Sigmoid colon (tissue), 7 donors: ENCODE measurements at regions of chr2 and their contacts with region 1.

Region 1: DNA sequence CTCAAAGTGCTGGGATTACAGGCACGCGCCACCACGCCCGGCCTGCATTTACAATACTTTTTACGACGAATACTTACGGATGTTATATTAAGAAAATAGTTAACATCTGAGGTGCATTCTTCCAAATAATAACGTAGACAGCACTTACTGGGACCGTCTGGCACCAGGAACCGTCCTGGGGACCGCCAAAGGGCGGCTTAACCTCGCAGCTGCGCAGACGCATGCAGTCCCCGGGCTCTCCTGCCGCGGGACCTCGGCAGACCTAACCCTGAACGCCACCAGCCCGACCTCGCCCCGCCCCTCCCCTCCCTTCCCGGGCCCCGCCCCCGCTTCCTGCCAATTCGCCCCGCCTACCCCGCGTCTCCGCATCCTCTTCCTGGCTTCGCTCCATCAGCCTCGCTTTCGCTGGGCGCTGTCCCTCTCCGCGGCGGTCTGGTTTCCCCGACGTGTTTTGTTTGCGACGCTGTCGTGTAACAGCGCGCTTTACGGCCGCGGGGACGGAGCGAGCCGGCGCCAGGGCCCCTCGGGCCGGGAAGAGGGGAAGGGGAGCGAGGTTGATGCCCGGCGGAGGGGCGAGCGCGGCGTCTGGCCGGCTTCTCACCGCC is at the start of gene CNOT11:
- DNase-seq: peak; percentile 99
- H3K4me3 ChIP-seq: peak within 1 kb of the TSS; percentile 80 to 99 (median 98)
- H3K27ac ChIP-seq: peak within 1 kb of the TSS; percentile 88 to 97 (median 94)
- H3K4me1 ChIP-seq: peaks cover 0 to 33% (median 31%) of the 10 kb centered on the region in 4 donors
- H3K27me3 ChIP-seq: no peaks in the 10 kb centered on the region
- CTCF ChIP-seq: peak in 1 of 4 experiments; percentile 8
- EP300 ChIP-seq: no peak
- POLR2A ChIP-seq: peak; percentile 49 to 74
- total RNA-seq, gene CNOT11: 21.4 to 27.4 (median 22.1) TPM

Region 2: GRCh38 chr2:101001691-101002561 is 250.6 kb before region 1 on chr2 and contains the start of gene RPL31:
- intact Hi-C with region 1: loop called (anchors 2 kb)
- DNase-seq: peak; percentile 99
- H3K4me3 ChIP-seq: peak within 1 kb of the TSS; percentile 64 to 89 (median 82)
- H3K27ac ChIP-seq: peak within 1 kb of the TSS; percentile 82 to 92 (median 89)
- H3K4me1 ChIP-seq: peaks cover 0 to 36% (median 28%) of the 10 kb centered on the region in 4 donors
- H3K27me3 ChIP-seq: no peaks in the 10 kb centered on the region
- CTCF ChIP-seq: no peak
- EP300 ChIP-seq: peak in 1 of 4 donors; percentile 65
- POLR2A ChIP-seq: peak; percentile 87
- total RNA-seq, gene RPL31: 1,030 to 2,345 (median 1,749) TPM

Region 3: GRCh38 chr2:101308432-101309210 is 56.1 kb after region 1 on chr2 and contains the start of gene RNF149:
- intact Hi-C with region 1: loop called (anchors 2 kb)
- DNase-seq: peak; percentile 96
- H3K4me3 ChIP-seq: peak within 1 kb of the TSS; percentile 68 to 93 (median 91)
- H3K27ac ChIP-seq: peak within 1 kb of the TSS; percentile 86 to 91 (median 90)
- H3K4me1 ChIP-seq: peaks cover 0 to 44% (median 36%) of the 10 kb centered on the region in 4 donors
- H3K27me3 ChIP-seq: no peaks in the 10 kb centered on the region
- CTCF ChIP-seq: peak in 2 of 4 experiments; percentile 6 to 32
- EP300 ChIP-seq: peak in 1 of 4 donors; percentile 58
- POLR2A ChIP-seq: peak; percentile 71 to 86
- total RNA-seq, gene RNF149: 40.0 to 65.4 (median 56.5) TPM